CD4-positive, alpha-beta memory T cell (primary cell): ENCODE measurements at regions of chr17 and their contacts with region 1.

Region 1: DNA sequence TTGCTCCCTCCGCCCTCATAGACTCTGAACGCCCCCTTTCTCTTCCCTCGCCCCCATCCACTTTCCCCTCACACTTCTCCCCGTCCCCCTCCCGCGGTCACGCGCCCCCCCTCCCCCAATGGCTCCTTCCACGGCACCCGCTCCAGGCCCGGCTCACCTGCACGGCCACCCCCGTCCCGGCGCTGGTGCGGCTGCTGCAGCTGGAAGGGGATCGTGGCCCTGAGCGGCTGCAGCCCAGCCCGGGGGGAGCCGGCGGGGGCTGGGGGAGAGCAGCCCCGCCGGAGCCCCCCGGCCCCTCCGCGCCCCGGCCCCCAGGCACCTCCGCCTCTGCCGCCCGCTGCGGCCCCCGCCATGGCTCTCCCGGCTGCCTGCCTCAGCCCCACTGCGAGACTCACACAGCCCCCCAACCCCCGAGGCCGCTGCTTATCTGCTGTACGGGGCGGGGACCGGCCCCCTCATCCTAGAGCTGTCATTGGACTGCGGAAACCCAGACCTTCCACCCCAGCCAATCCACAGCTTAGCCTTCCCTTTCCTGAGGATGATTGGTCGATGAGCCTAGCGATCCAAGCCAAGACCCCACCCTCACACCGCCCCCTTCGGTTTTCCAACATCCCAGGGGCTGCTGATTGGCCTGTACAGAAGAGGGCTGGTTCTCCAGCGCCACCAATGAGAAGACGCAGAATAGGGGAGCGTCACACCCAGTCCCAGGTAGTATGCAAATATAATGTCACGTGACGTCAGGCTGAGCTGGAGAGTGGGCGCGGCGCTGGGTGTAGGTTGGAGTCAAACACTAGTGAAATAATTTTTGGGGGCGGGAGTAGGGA is at the start of gene FAM117A:
- DNase-seq: peak; percentile 97 to 100 (median 98)
- H3K4me3 ChIP-seq: peak within 1 kb of the TSS; percentile 38 to 70
- H3K4me3 Mint-ChIP-seq: peak within 1 kb of the TSS; percentile 92 to 98 (median 96)
- H3K27ac ChIP-seq: peak within 1 kb of the TSS; percentile 71
- H3K27ac Mint-ChIP-seq: peak within 1 kb of the TSS; percentile 89 to 98 (median 94)
- H3K4me1 ChIP-seq: peaks cover 46% of the 10 kb centered on the region
- H3K4me1 Mint-ChIP-seq: peaks cover 40 to 60% (median 45%) of the 10 kb centered on the region in 4 donors
- H3K27me3 ChIP-seq: no peaks in the 10 kb centered on the region
- H3K27me3 Mint-ChIP-seq: no peaks in the 10 kb centered on the region
- total RNA-seq, gene FAM117A: 95.1 to 102 TPM

Region 2: GRCh38 chr17:49715717-49716279 is 48.1 kb before region 1 on chr17:
- CTCF ChIA-PET with region 1: interaction called, 8 read pairs
- POLR2A ChIA-PET with region 1: interaction called, 156 read pairs
- intact Hi-C with region 1: no loop called
- DNase-seq: peak; percentile 77 to 89 (median 84)
- H3K4me3 ChIP-seq: peak overlapping the region in 1 of 2 donors; percentile 1
- H3K4me3 Mint-ChIP-seq: peak overlapping the region; percentile 52 to 85 (median 60)
- H3K27ac ChIP-seq: peak overlapping the region; percentile 78
- H3K27ac Mint-ChIP-seq: peak overlapping the region; percentile 92 to 99 (median 98)
- H3K4me1 ChIP-seq: peaks cover 46% of the 10 kb centered on the region
- H3K4me1 Mint-ChIP-seq: peaks cover 37 to 53% (median 44%) of the 10 kb centered on the region in 4 donors
- H3K27me3 ChIP-seq: no peaks in the 10 kb centered on the region
- H3K27me3 Mint-ChIP-seq: peaks cover 0 to 2% of the 10 kb centered on the region in 2 donors

Region 3: GRCh38 chr17:49730078-49730784 is 33.7 kb before region 1 on chr17:
- CTCF ChIA-PET with region 1: interaction called, 3 read pairs
- POLR2A ChIA-PET with region 1: interaction called, 17 read pairs
- intact Hi-C with region 1: no loop called
- DNase-seq: no peak
- H3K4me3 ChIP-seq: no peak overlapping the region
- H3K4me3 Mint-ChIP-seq: no peak overlapping the region
- H3K27ac ChIP-seq: no peak overlapping the region
- H3K27ac Mint-ChIP-seq: peak overlapping the region; percentile 54 to 84 (median 59)
- H3K4me1 ChIP-seq: peaks cover 61% of the 10 kb centered on the region
- H3K4me1 Mint-ChIP-seq: peaks cover 41 to 68% (median 49%) of the 10 kb centered on the region in 4 donors
- H3K27me3 ChIP-seq: no peaks in the 10 kb centered on the region
- H3K27me3 Mint-ChIP-seq: no peaks in the 10 kb centered on the region

Region 4: GRCh38 chr17:49739641-49740271 is 24.2 kb before region 1 on chr17:
- CTCF ChIA-PET with region 1: interaction called, 7 read pairs
- POLR2A ChIA-PET with region 1: interaction called, 427 read pairs
- intact Hi-C with region 1: loop called (anchors 1 kb)
- DNase-seq: peak; percentile 96 to 100 (median 99)
- H3K4me3 ChIP-seq: peak overlapping the region; percentile 32 to 80
- H3K4me3 Mint-ChIP-seq: peak overlapping the region; percentile 93 to 99 (median 97)
- H3K27ac ChIP-seq: peak overlapping the region; percentile 99
- H3K27ac Mint-ChIP-seq: peak overlapping the region; percentile 99 to 100 (median 100)
- H3K4me1 ChIP-seq: peaks cover 97% of the 10 kb centered on the region
- H3K4me1 Mint-ChIP-seq: peaks cover 68 to 94% (median 78%) of the 10 kb centered on the region in 4 donors
- H3K27me3 ChIP-seq: no peaks in the 10 kb centered on the region
- H3K27me3 Mint-ChIP-seq: no peaks in the 10 kb centered on the region

Region 5: DNA sequence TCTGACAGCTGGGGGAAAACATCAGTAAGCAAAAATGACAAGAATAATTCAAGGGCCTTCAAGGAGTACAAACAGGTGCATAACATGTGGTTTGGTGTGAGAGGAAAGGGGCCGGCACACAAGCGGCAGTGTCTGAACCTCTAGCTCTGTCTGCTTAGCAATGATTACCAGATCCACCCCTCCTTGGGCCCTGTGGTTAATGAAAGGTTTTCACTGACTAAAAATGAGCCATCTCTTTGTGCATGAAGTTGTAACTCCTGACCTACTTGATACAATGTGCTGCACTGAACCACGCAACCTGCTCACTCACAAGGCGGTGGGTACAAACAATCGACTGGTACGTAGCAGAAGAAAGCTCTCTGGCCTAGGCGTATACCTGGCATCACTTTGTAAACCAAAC is 15.2 kb before region 1 on chr17:
- CTCF ChIA-PET with region 1: interaction called, 29 read pairs
- POLR2A ChIA-PET with region 1: interaction called, 427 read pairs
- intact Hi-C with region 1: loop called (anchors 1 kb)
- DNase-seq: peak; percentile 74 to 91 (median 80)
- H3K4me3 ChIP-seq: peak overlapping the region in 1 of 2 donors; percentile 27
- H3K4me3 Mint-ChIP-seq: peak overlapping the region; percentile 38 to 90 (median 80)
- H3K27ac ChIP-seq: peak overlapping the region; percentile 89
- H3K27ac Mint-ChIP-seq: peak overlapping the region; percentile 94 to 99 (median 97)
- H3K4me1 ChIP-seq: peaks cover 97% of the 10 kb centered on the region
- H3K4me1 Mint-ChIP-seq: peaks cover 56 to 91% (median 76%) of the 10 kb centered on the region in 4 donors
- H3K27me3 ChIP-seq: no peaks in the 10 kb centered on the region
- H3K27me3 Mint-ChIP-seq: no peaks in the 10 kb centered on the region